ENCODE measurements at regions of chr14 and their contacts with region 1.

Region 1: GRCh38 chr14:51283402-51284085 is 43.5 kb downstream of the TMX1 start:
- DNase-seq: peak; percentile 85
- H3K4me3 ChIP-seq: no peak overlapping the region
- H3K27ac ChIP-seq: no peak overlapping the region
- H3K4me1 ChIP-seq: no peaks in the 10 kb centered on the region
- H3K27me3 ChIP-seq: no peaks in the 10 kb centered on the region
- CTCF ChIP-seq: peak; percentile 79

Region 2: GRCh38 chr14:51651388-51652167 is 368.0 kb after region 1 on chr14 and contains the start of gene FRMD6:
- CTCF ChIA-PET with region 1: interaction called, 11 read pairs
- POLR2A ChIA-PET with region 1: no interaction called
- intact Hi-C with region 1: loop called (anchors 5 kb)
- DNase-seq: peak; percentile 90
- H3K4me3 ChIP-seq: peak within 1 kb of the TSS; percentile 95
- H3K27ac ChIP-seq: peak within 1 kb of the TSS; percentile 95
- H3K4me1 ChIP-seq: peaks cover 31% of the 10 kb centered on the region
- H3K27me3 ChIP-seq: no peaks in the 10 kb centered on the region
- CTCF ChIP-seq: peak; percentile 72
- total RNA-seq, gene FRMD6: 22.0 and 27.6 TPM in 2 replicates

Region 3: DNA sequence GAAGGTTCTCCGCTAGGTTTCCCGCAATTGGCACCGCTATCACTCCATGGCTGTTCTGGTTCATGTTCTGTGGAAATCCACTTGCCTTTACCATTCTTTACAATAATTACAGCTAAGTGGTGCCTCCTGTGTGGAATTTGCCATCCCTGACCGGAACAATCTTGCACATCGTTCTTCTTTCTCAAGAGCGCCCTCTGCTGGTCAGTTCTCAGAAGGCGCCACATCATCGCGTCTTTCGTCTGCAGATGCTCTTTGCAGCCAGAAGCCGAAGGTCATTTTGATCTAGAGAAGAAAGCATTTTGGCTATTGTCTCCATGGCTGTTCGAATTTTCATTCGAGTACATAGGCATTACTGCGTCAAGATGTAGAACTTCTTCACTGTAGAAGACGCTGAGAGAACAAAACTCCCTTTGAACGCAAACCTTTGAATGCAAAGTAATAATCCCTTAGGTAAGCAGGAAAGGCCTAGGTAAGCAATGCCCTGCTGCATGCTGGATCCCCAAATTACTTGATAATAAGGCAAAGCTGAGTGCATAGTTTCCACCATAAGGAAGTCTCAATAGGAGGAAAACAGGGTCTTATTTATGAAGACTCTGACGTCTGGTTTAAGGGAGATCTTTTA is 695.7 kb after region 1 on chr14:
- CTCF ChIA-PET with region 1: no interaction called
- POLR2A ChIA-PET with region 1: no interaction called
- intact Hi-C with region 1: loop called (anchors 1 kb)
- DNase-seq: peak; percentile 83
- H3K4me3 ChIP-seq: no peak overlapping the region
- H3K27ac ChIP-seq: no peak overlapping the region
- H3K4me1 ChIP-seq: no peaks in the 10 kb centered on the region
- H3K27me3 ChIP-seq: no peaks in the 10 kb centered on the region
- CTCF ChIP-seq: peak; percentile 97